ENCODE measurements at regions of chr3 and their contacts with region 1.

Region 1: DNA sequence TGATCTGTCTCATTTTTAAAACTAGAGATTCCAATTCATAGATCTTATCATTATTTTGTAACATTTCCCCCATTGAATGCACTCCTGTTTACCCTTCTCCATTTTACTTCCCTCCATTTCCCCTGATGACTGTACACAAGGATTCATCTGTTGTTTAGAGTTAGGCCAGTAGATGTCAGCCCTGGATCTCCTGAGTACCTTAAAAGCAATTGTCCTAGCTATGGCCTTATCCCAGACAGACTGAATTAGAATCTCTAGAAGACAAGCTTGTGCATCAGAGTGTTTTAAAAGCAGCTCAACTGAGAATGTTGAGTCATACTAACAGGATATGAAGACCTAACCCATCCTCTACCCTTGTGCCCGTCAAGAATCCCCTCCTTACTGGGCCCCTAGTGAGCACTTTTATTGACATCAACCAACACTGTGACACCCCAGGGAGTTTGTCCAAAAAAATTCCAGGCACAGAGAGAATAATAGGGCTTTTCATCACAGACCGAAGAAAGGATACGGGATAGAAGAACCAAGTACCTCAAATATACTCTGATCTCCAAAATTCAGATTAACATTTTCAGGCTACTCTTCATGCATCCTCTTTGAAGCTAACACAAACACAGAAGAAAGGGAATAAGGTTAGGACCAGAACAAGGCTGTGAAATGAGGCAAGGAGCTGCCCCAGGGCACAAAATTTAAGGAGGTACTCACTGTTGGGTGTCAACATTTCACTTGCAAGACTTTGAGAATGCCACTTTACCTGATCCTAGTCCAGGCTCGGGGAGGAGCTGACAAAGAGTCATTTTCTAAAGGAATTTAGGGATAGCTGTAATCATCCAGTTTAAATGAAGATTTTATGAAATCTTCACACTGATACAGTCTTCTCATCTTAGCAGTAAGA is 17.1 kb downstream of the ZBED2 start:
- DNase-seq: no peak
- ATAC-seq: peak; percentile 93
- H3K4me3 Mint-ChIP-seq: no peak overlapping the region
- H3K27ac Mint-ChIP-seq: peak overlapping the region; percentile 64
- H3K4me1 Mint-ChIP-seq: peaks cover 33% of the 10 kb centered on the region
- H3K27me3 Mint-ChIP-seq: no peaks in the 10 kb centered on the region
- CTCF ChIP-seq: no peak

Region 2: GRCh38 chr3:111315925-111316587 is 262.0 kb before region 1 on chr3:
- CTCF ChIA-PET with region 1: no interaction called
- POLR2A ChIA-PET with region 1: no interaction called
- intact Hi-C with region 1: no loop called
- DNase-seq: no peak
- ATAC-seq: no peak
- H3K4me3 Mint-ChIP-seq: no peak overlapping the region
- H3K27ac Mint-ChIP-seq: no peak overlapping the region
- H3K4me1 Mint-ChIP-seq: peaks cover 11% of the 10 kb centered on the region
- H3K27me3 Mint-ChIP-seq: no peaks in the 10 kb centered on the region
- CTCF ChIP-seq: no peak

Region 3: GRCh38 chr3:111616417-111617105 is 38.5 kb after region 1 on chr3:
- CTCF ChIA-PET with region 1: interaction called, 72 read pairs
- POLR2A ChIA-PET with region 1: interaction called, 19 read pairs
- intact Hi-C with region 1: loop called (anchors 1 kb)
- DNase-seq: no peak
- ATAC-seq: peak; percentile 89
- H3K4me3 Mint-ChIP-seq: no peak overlapping the region
- H3K27ac Mint-ChIP-seq: peak overlapping the region; percentile 89
- H3K4me1 Mint-ChIP-seq: peaks cover 21% of the 10 kb centered on the region
- H3K27me3 Mint-ChIP-seq: no peaks in the 10 kb centered on the region
- CTCF ChIP-seq: no peak

Region 4: GRCh38 chr3:111747490-111747889 is 169.4 kb after region 1 on chr3:
- CTCF ChIA-PET with region 1: no interaction called
- POLR2A ChIA-PET with region 1: no interaction called
- intact Hi-C with region 1: no loop called
- DNase-seq: no peak
- ATAC-seq: no peak
- H3K4me3 Mint-ChIP-seq: no peak overlapping the region
- H3K27ac Mint-ChIP-seq: no peak overlapping the region
- H3K4me1 Mint-ChIP-seq: no peaks in the 10 kb centered on the region
- H3K27me3 Mint-ChIP-seq: no peaks in the 10 kb centered on the region
- CTCF ChIP-seq: no peak

Region 5: DNA sequence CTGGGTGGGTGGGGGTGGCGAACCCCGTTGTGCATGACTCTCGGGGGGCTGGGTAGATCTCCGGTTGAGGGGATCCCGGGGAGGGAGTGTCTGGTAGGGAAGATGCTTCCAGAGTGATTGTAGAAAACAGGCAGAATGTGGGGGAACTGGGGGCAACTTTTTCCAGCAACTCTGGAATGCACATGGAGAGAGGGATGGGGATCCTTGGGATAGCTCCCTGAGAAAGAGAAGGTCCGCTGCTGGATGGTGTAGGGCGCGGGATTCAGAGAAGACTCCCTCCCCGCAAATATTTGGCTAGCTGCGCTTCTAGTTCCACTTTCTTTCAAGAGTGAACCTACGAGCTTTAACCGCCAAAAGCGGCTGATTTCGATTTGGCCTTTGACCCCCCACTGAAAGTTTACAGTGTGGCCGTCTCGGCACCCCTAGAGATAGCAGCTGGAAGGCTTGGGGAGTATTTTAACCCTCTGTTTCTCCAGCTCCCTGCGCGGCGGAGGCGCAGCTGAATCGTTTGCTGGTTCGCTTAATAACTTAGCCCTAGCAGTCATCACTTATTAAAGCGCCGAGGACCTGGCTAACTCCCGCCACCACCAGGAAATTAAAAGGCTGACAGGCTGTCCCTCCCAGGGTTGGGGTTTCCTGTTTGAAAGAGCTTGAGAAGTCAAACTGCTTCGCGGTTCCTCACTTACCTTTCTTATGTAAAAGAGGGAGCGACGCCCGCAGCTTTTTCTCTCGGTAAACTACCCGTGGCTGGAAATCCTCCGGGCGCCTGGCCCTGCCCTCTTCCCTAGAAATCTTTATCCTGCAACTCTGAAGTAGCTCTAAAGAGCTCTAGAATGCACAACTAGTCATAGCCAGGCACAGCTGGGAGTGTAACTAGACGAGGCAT is 282.2 kb after region 1 on chr3:
- CTCF ChIA-PET with region 1: no interaction called
- POLR2A ChIA-PET with region 1: no interaction called
- intact Hi-C with region 1: loop called (anchors 10 kb)
- DNase-seq: peak; percentile 52
- ATAC-seq: peak; percentile 80
- H3K4me3 Mint-ChIP-seq: peak overlapping the region; percentile 91
- H3K27ac Mint-ChIP-seq: peak overlapping the region; percentile 87
- H3K4me1 Mint-ChIP-seq: peaks cover 18% of the 10 kb centered on the region
- H3K27me3 Mint-ChIP-seq: peaks cover 9% of the 10 kb centered on the region
- CTCF ChIP-seq: no peak

Region 6: DNA sequence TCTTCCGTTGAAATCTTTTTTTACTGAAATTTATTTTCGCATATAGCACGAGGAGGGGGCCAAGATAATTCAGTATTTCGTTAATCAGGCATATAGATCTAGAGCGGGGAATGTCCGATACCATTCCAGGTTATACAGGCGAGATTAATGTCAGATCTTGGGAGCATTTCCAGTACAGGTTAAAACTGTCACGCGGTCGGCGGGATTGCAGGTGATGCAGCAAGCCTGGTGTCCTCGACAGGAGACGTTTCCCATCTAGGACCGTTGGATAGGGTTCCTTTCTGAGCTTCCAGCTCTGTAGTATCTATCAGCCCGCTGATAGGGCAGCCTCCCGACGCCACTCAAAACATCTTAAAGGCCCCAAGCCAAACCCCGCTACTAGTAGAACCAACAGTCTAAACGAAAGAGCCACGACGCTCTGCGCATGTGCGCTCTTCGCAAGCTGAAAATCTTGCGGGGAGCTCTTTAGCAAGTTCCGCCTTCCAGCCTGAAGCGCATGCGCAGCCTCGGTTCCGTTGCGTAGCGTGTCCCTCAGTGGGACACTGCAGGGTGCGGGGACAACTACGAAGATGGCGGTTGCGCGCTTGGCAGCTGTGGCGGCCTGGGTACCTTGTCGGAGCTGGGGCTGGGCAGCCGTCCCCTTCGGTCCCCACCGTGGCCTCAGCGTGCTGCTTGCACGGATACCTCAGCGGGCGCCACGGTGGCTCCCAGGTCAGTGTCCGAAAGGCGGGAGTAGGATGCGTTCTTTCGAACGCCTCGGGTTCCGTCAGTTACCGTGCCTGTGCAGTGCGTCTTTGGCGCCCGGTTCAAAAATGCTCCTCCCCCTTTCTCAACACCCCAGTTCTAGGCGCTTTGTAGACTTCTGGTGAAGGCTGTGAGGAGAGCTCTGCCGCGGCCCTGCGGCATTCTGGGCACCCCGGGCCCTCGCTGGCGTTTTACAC is 400.7 kb after region 1 on chr3 and contains the start of gene ABHD10:
- CTCF ChIA-PET with region 1: no interaction called
- POLR2A ChIA-PET with region 1: interaction called, 10 read pairs
- intact Hi-C with region 1: no loop called
- DNase-seq: peak; percentile 90
- ATAC-seq: peak; percentile 94
- H3K4me3 Mint-ChIP-seq: peak within 1 kb of the TSS; percentile 93
- H3K27ac Mint-ChIP-seq: peak within 1 kb of the TSS; percentile 94
- H3K4me1 Mint-ChIP-seq: peaks cover 43% of the 10 kb centered on the region
- H3K27me3 Mint-ChIP-seq: no peaks in the 10 kb centered on the region
- CTCF ChIP-seq: no peak
- total RNA-seq, gene ABHD10: 25.2 and 28.4 TPM in 2 replicates

Measured in activated B cell treated with CpG ODN at 0.5 μM for 24 hours (primary cell).